PC-9 (cell line): ENCODE measurements at regions of chr19 and their contacts with region 1.

Region 1: GRCh38 chr19:12983542-12984142 is 11.6 kb upstream of the NFIX start:
- DNase-seq: peak in 1 of 2 experiments; percentile 78
- H3K4me3 ChIP-seq: no peak overlapping the region; the same call in 1 of the 2 replicates
- H3K27ac ChIP-seq: no peak overlapping the region
- H3K4me1 ChIP-seq: peaks cover 15% of the 10 kb centered on the region
- H3K27me3 ChIP-seq: peaks cover 19% of the 10 kb centered on the region
- CTCF ChIP-seq: peak; percentile 97

Region 2: GRCh38 chr19:13093407-13094105 is 109.9 kb after region 1 on chr19:
- CTCF ChIA-PET with region 1: interaction called, 3 read pairs
- POLR2A ChIA-PET with region 1: no interaction called
- intact Hi-C with region 1: loop called (anchors 1 kb)
- DNase-seq: peak; percentile 75
- H3K4me3 ChIP-seq: no peak overlapping the region
- H3K27ac ChIP-seq: no peak overlapping the region
- H3K4me1 ChIP-seq: peaks cover 9% of the 10 kb centered on the region; the same call in 1 of the 2 replicates
- H3K27me3 ChIP-seq: no peaks in the 10 kb centered on the region
- CTCF ChIP-seq: peak; percentile 99

Region 3: GRCh38 chr19:13172068-13172896 is 188.6 kb after region 1 on chr19:
- CTCF ChIA-PET with region 1: no interaction called
- POLR2A ChIA-PET with region 1: no interaction called
- intact Hi-C with region 1: no loop called
- DNase-seq: peak; percentile 95 to 97
- H3K4me3 ChIP-seq: no peak overlapping the region; the same call in 1 of the 2 replicates
- H3K27ac ChIP-seq: peak overlapping the region; percentile 99
- H3K4me1 ChIP-seq: peaks cover 63% of the 10 kb centered on the region
- H3K27me3 ChIP-seq: no peaks in the 10 kb centered on the region
- CTCF ChIP-seq: no peak